ENCODE measurements at regions of chr16 and their contacts with region 1.

Region 1: DNA sequence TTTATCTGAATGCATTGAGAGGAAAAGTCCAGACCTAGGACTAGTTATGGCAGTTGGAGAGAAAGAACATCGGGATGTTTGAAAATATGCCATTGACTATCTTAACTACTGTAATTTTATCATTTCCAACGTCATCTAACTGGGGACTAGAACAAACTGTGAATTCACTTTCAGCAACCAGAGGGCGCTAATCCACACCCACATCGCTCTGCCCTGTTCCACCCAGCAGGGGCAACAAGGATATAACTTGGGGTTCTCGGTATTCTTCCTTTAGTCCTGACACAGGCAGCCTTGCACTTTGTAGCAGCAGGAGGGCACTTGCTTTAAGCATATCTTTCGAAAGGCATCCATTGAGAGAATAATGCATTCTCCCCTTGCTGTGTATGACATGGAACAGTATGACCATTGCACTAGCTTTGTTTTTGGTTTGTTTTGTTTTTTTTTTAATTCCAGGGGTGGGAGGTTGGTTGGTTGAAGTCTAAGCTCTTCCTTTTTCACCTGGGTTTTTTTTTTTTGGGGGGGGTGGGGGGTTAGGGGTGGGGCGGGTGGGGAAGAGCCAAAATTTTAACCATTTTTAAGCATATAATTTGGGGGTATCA is 31.5 kb downstream of the SIAH1 start:
- DNase-seq: peak; percentile 70
- H3K4me3 ChIP-seq: no peak overlapping the region
- H3K27ac ChIP-seq: no peak overlapping the region
- H3K4me1 ChIP-seq: no peaks in the 10 kb centered on the region
- H3K27me3 ChIP-seq: no peaks in the 10 kb centered on the region
- CTCF ChIP-seq: peak; percentile 70 to 83 (median 81)
- POLR2A ChIP-seq: no peak

Region 2: DNA sequence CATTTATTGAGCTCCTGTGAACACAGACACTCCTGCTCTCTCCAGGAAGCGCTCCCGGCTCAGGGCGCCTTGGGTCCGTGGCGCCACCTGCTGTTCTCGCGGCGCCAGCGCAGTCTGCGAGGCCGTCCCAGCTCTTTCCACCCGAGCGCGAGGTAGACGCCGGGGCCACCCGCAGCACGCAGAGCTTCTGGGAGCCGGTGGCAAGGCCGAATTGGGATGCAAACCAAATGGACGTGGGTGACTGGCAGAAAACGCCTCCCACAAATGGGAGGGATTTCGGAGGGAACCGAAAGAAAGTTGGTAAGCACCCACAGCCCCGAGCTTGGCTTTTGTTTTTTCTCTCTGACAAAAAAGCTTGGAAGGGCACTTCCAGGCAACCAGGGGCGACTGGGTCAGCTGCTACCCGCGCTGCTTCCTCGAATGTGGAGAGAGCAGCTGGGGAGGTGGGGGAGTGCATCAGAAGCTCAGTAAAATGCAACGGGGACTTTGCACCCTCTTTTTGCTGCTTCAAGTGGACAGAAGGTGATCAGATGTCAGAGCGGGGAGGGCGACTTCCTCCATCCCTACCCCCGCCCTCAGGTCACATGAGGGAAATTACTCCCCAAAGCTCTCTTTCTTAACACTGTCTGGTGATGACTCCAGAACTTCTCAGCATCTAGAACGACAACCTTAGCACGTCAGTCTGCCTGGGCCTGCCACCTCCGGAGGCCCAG is 269.8 kb after region 1 on chr16:
- intact Hi-C with region 1: loop called (anchors 10 kb)
- DNase-seq: peak; percentile 85
- H3K4me3 ChIP-seq: peak overlapping the region; percentile 26 to 53
- H3K27ac ChIP-seq: peak overlapping the region; percentile 50 to 68
- H3K4me1 ChIP-seq: no peaks in the 10 kb centered on the region
- H3K27me3 ChIP-seq: no peaks in the 10 kb centered on the region
- CTCF ChIP-seq: peak; percentile 85 to 96 (median 91)
- POLR2A ChIP-seq: no peak